PC-3 (cell line): ENCODE measurements at regions of chr7 and their contacts with region 1.

Region 1: GRCh38 chr7:139731802-139732470 is 45.9 kb downstream of the HIPK2 start:
- DNase-seq: peak; percentile 97
- ATAC-seq: peak; percentile 88
- H3K4me3 ChIP-seq: peak overlapping the region; percentile 53
- H3K27ac ChIP-seq: peak overlapping the region; percentile 83
- H3K4me1 ChIP-seq: peaks cover 47% of the 10 kb centered on the region
- H3K27me3 ChIP-seq: no peaks in the 10 kb centered on the region
- CTCF ChIP-seq: no peak

Region 2: GRCh38 chr7:139645572-139646523 is 86.1 kb before region 1 on chr7:
- CTCF ChIA-PET with region 1: no interaction called
- POLR2A ChIA-PET with region 1: interaction called, 4 read pairs
- intact Hi-C with region 1: loop called (anchors 2 kb)
- DNase-seq: peak; percentile 81
- ATAC-seq: peak; percentile 67
- H3K4me3 ChIP-seq: no peak overlapping the region
- H3K27ac ChIP-seq: peak overlapping the region; percentile 51
- H3K4me1 ChIP-seq: peaks cover 17% of the 10 kb centered on the region; the same call in 1 of the 2 replicates
- H3K27me3 ChIP-seq: no peaks in the 10 kb centered on the region
- CTCF ChIP-seq: peak; percentile 88

Region 3: GRCh38 chr7:139673230-139673629 is 58.7 kb before region 1 on chr7:
- CTCF ChIA-PET with region 1: no interaction called
- POLR2A ChIA-PET with region 1: no interaction called
- intact Hi-C with region 1: loop called (anchors 2 kb)
- DNase-seq: peak; percentile 23
- ATAC-seq: peak; percentile 11
- H3K4me3 ChIP-seq: no peak overlapping the region
- H3K27ac ChIP-seq: peak overlapping the region; percentile 100
- H3K4me1 ChIP-seq: peaks cover 49% of the 10 kb centered on the region
- H3K27me3 ChIP-seq: no peaks in the 10 kb centered on the region
- CTCF ChIP-seq: no peak

Region 4: DNA sequence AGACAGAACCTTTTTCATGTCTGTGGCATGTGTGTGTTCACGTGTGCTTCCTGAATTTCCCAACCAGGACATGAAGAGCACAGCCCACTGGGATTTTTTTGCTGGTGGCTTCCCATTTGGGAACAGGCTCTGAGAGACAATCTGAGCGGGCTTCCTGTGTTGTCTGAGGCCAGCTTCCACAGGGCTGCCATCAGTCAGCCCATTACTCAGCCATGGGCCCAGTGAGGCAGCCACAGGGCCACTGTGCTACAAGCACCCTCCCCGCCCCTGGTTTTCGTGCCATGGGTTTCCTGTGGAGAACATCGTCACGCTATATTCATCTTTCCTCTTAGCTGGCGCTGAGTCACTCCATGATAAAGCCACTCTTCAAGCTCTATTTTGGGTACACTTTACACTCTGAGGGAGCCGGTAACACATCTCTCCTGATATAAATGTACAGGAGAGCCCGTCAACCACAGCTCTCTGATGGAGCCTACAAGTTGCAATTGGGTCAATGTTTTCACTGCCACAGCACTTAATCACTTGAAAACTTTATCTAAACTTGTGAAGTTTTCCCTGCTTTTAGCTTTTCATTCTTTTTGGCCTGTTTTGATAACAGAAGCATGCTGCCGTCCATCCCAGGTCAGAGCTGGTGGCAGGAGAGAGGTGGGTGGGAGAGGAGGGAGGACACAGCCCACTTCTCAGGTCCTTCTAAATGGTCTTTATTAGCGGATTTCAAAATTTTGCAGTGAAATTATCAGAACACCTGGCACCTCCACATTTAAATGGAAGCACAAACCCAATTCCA is 51.1 kb before region 1 on chr7:
- CTCF ChIA-PET with region 1: no interaction called
- POLR2A ChIA-PET with region 1: no interaction called
- intact Hi-C with region 1: loop called (anchors 2 kb)
- DNase-seq: peak; percentile 98
- ATAC-seq: peak; percentile 66
- H3K4me3 ChIP-seq: peak overlapping the region; percentile 17; the same call in 1 of the 2 replicates
- H3K27ac ChIP-seq: peak overlapping the region; percentile 100
- H3K4me1 ChIP-seq: peaks cover 61% of the 10 kb centered on the region
- H3K27me3 ChIP-seq: no peaks in the 10 kb centered on the region
- CTCF ChIP-seq: no peak

Region 5: GRCh38 chr7:139720705-139721231 is 11.2 kb before region 1 on chr7:
- CTCF ChIA-PET with region 1: no interaction called
- POLR2A ChIA-PET with region 1: no interaction called
- intact Hi-C with region 1: loop called (anchors 1 kb)
- DNase-seq: peak; percentile 81
- ATAC-seq: peak; percentile 85
- H3K4me3 ChIP-seq: no peak overlapping the region
- H3K27ac ChIP-seq: peak overlapping the region; percentile 54
- H3K4me1 ChIP-seq: peaks cover 50% of the 10 kb centered on the region
- H3K27me3 ChIP-seq: no peaks in the 10 kb centered on the region
- CTCF ChIP-seq: no peak

Region 6: GRCh38 chr7:139771001-139771970 is 39.4 kb after region 1 on chr7:
- CTCF ChIA-PET with region 1: no interaction called
- POLR2A ChIA-PET with region 1: no interaction called
- intact Hi-C with region 1: loop called (anchors 1 kb)
- DNase-seq: peak; percentile 92
- ATAC-seq: peak; percentile 53
- H3K4me3 ChIP-seq: peak overlapping the region; percentile 54
- H3K27ac ChIP-seq: peak overlapping the region; percentile 99
- H3K4me1 ChIP-seq: peaks cover 56% of the 10 kb centered on the region
- H3K27me3 ChIP-seq: no peaks in the 10 kb centered on the region
- CTCF ChIP-seq: no peak

Region 7: DNA sequence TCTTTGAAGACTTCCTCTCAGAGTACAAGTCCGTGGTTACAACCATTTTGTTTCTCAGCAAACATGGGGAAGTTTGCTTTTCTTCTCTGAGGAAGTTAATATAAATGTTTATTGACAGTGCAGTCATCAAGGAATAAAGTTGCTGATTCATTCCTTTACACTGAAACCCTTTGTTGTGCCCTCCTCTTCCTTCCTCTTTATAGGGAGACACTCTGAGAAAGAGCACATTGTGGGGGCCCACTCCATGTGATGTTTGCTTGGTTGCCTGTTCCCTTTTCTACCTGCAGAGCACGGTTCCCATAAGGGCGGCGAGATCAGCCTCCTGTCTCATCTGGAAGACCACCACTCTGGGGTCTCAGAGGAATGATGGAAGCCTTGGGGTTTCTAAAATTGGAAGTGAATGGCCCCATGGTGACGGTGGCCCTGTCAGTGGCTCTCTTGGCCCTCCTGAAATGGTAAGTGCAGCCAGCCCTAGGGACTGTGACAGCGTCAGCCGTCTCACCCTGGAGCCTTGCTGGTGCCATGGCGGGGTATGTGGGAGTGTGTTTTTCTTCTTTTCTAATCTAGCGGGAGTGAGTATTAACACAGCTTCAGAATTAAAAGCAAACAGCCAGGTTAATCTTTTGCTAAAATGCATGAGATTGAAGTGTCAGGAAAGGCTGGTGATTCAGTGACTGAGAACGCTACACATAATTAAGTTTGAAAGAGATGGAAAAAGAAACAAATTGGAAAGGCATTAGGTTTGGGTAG is 97.3 kb after region 1 on chr7 and contains the start of gene TBXAS1:
- CTCF ChIA-PET with region 1: no interaction called
- POLR2A ChIA-PET with region 1: no interaction called
- intact Hi-C with region 1: loop called (anchors 1 kb)
- DNase-seq: peak; percentile 65
- ATAC-seq: peak; percentile 89
- H3K4me3 ChIP-seq: no peak within 1 kb of the TSS
- H3K27ac ChIP-seq: peak within 1 kb of the TSS; percentile 65
- H3K4me1 ChIP-seq: peaks cover 22% of the 10 kb centered on the region
- H3K27me3 ChIP-seq: no peaks in the 10 kb centered on the region
- CTCF ChIP-seq: no peak
- total RNA-seq, gene TBXAS1: 21.8 and 27.5 TPM in 2 replicates